ENCODE measurements at regions of chr11 and their contacts with region 1.

Region 1: DNA sequence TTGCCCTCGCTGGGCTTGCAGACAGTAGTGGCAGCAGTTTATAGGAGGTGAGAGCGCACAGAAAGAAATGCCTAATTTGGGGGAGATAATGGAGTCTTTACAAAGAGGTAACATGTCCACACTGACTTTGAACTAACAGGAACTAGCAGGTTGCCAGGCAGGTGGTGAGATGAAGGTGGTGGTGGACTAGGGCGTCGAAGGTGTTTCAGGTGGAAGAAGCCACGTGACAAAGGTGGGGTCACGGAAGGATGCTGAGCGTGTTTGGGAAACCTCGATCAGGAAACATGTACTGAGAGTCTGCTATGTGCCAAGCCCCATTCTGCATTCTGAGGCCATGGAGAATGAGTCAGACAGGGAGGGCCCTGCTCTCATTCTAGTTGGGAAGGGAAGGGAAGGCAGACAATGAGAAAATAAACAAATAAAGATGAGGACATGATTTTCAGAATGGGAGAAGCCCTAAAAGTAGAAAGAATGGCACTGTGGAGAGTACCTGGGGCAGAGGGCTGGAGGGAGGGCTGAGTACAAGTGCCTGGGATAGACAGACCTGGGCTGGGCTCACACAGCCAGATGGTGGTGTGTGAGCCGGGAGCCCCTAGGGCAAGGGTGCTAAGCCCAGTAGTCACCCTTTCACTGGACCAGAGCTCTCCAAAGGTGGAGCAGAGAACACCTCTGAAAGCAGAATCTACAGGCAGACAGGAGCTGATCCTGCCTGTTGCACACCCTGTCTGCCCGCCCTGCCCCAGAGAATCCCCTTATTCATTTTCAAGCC is 16.2 kb upstream of the NNMT start:
- DNase-seq: peak in 1 of 7 donors; percentile 45
- H3K4me3 ChIP-seq: no peak overlapping the region
- H3K27ac ChIP-seq: peak overlapping the region in 2 of 5 donors; percentile 32 to 37
- H3K4me1 ChIP-seq: no peaks in the 10 kb centered on the region
- H3K27me3 ChIP-seq: no peaks in the 10 kb centered on the region
- CTCF ChIP-seq: no peak
- POLR2A ChIP-seq: no peak

Region 2: GRCh38 chr11:114326776-114327175 is 46.8 kb after region 1 on chr11:
- intact Hi-C with region 1: loop called in 1 of 2 experiments (anchors 5 kb)
- DNase-seq: no peak
- H3K4me3 ChIP-seq: no peak overlapping the region
- H3K27ac ChIP-seq: no peak overlapping the region
- H3K4me1 ChIP-seq: no peaks in the 10 kb centered on the region
- H3K27me3 ChIP-seq: no peaks in the 10 kb centered on the region
- CTCF ChIP-seq: no peak
- POLR2A ChIP-seq: no peak

Region 3: GRCh38 chr11:114586797-114587196 is 306.8 kb after region 1 on chr11:
- intact Hi-C with region 1: no loop called
- DNase-seq: no peak
- H3K4me3 ChIP-seq: no peak overlapping the region
- H3K27ac ChIP-seq: no peak overlapping the region
- H3K4me1 ChIP-seq: no peaks in the 10 kb centered on the region
- H3K27me3 ChIP-seq: no peaks in the 10 kb centered on the region
- CTCF ChIP-seq: no peak
- POLR2A ChIP-seq: no peak

Region 4: GRCh38 chr11:114762408-114762807 is 482.4 kb after region 1 on chr11:
- intact Hi-C with region 1: loop called in 1 of 2 experiments (anchors 10 kb)
- DNase-seq: peak; percentile 52 to 86 (median 66)
- H3K4me3 ChIP-seq: no peak overlapping the region
- H3K27ac ChIP-seq: no peak overlapping the region
- H3K4me1 ChIP-seq: no peaks in the 10 kb centered on the region
- H3K27me3 ChIP-seq: peaks cover 4% of the 10 kb centered on the region
- CTCF ChIP-seq: peak; percentile 53 to 70 (median 62)
- POLR2A ChIP-seq: no peak

Measured in adrenal gland (tissue), 19 donors.